ENCODE measurements at regions of chr9 and their contacts with region 1.

Region 1: DNA sequence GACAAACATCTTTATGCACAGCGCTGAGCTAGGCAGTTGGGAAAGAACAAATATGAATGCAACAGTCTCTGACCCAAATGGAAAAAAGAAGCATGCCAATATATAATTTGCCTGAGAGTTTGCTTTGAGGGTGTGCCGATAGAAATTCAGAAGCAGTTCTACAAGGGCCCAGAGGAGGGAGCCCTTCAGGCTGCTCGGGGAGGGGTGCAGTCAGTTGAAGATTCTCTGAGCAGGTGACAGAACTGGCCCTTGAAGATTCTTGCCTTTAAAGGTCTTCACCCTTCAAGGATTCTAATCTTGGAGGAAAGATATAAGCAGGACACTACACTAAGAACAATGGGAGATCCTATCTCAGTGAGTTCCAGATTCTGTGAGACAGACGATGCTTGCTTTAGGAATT is 3.7 kb upstream of the PAPPA start:
- DNase-seq: no peak
- H3K4me3 ChIP-seq: no peak overlapping the region
- H3K27ac ChIP-seq: no peak overlapping the region
- H3K4me1 ChIP-seq: no peaks in the 10 kb centered on the region
- H3K27me3 ChIP-seq: no peaks in the 10 kb centered on the region
- CTCF ChIP-seq: peak; percentile 28 to 58 (median 43)

Region 2: GRCh38 chr9:115328228-115328627 is 821.6 kb before region 1 on chr9:
- intact Hi-C with region 1: loop called (anchors 10 kb)
- DNase-seq: peak; percentile 56 to 87
- H3K4me3 ChIP-seq: no peak overlapping the region
- H3K27ac ChIP-seq: peak overlapping the region; percentile 2 to 29
- H3K4me1 ChIP-seq: peaks cover 3 to 13% of the 10 kb centered on the region in 2 donors
- H3K27me3 ChIP-seq: no peaks in the 10 kb centered on the region
- CTCF ChIP-seq: no peak

Region 3: DNA sequence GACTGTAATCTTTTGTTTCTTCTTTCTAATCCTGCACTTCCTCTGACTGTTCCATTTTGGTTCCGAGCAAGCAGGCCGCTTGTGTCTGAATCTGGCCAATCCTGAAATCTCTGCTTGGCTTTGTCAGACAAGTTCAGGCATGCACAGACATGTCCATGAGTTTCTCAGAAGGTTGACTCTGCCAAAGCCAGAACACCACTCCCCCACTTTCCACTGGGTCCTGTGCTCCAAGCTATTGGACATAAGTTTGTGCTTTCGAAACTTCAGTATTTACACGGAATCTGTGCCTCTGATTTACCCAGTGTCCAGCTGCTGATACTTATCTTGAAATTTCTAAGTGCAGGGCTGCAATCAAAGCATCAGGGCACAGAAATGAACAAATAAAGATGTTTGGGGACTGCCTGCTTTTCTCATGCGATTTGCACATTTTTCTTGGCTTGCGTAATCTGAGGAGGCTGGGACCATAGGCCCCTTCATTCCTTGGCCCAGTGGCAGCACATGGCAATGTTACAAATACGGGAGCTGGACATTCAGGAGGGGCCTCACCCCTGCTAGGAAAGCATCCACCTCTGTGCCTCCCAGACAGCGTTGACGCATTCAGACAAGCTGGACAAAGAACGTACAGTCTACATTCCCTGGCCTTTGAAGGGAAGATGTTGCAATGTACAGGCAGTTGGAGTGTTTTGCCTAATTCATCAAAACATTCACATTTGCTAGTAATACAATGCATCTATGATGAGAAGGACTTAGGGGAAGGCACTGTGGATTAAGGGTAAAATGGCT is 205.5 kb before region 1 on chr9:
- intact Hi-C with region 1: loop called (anchors 5 kb)
- DNase-seq: peak in 1 of 2 donors; percentile 95
- H3K4me3 ChIP-seq: peak overlapping the region in 1 of 2 donors; percentile 10
- H3K27ac ChIP-seq: peak overlapping the region; percentile 83 to 90
- H3K4me1 ChIP-seq: peaks cover 0 to 18% of the 10 kb centered on the region in 2 donors
- H3K27me3 ChIP-seq: no peaks in the 10 kb centered on the region
- CTCF ChIP-seq: no peak

Region 4: GRCh38 chr9:116572095-116572748 is 422.4 kb after region 1 on chr9:
- intact Hi-C with region 1: loop called (anchors 5 kb)
- DNase-seq: peak in 1 of 2 donors; percentile 87
- H3K4me3 ChIP-seq: no peak overlapping the region
- H3K27ac ChIP-seq: no peak overlapping the region
- H3K4me1 ChIP-seq: no peaks in the 10 kb centered on the region
- H3K27me3 ChIP-seq: no peaks in the 10 kb centered on the region
- CTCF ChIP-seq: peak; percentile 72 to 93 (median 73)